Breast epithelium (tissue), 4 donors: ENCODE measurements at regions of chr6 and their contacts with region 1.

Region 1: DNA sequence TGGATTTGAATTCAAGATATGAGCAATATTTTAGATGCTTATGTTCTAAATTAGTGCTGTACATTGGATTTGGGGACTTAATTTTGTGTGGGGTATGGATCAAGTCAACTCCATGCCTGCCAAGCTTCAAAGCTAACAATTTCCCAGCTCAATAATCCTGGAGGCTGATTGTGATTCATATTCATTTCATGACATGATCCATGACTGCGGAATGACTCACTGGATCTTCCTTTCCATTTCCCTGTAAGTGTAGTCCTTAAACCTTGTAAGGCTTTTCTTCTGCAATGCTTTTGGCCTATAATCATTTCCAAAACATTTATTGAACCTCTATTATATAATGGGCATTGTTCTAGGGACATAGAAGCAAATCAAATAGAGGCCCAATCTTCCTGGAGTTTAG is 44.7 kb upstream of the CCN2 start:
- DNase-seq: no peak
- H3K4me3 ChIP-seq: no peak overlapping the region
- H3K27ac ChIP-seq: no peak overlapping the region
- H3K4me1 ChIP-seq: no peaks in the 10 kb centered on the region
- H3K27me3 ChIP-seq: no peaks in the 10 kb centered on the region
- CTCF ChIP-seq: no peak
- POLR2A ChIP-seq: no peak

Region 2: GRCh38 chr6:131890091-131890490 is 105.8 kb before region 1 on chr6:
- intact Hi-C with region 1: no loop called
- DNase-seq: no peak
- H3K4me3 ChIP-seq: no peak overlapping the region
- H3K27ac ChIP-seq: no peak overlapping the region
- H3K4me1 ChIP-seq: no peaks in the 10 kb centered on the region
- H3K27me3 ChIP-seq: no peaks in the 10 kb centered on the region
- CTCF ChIP-seq: no peak
- POLR2A ChIP-seq: no peak

Region 3: DNA sequence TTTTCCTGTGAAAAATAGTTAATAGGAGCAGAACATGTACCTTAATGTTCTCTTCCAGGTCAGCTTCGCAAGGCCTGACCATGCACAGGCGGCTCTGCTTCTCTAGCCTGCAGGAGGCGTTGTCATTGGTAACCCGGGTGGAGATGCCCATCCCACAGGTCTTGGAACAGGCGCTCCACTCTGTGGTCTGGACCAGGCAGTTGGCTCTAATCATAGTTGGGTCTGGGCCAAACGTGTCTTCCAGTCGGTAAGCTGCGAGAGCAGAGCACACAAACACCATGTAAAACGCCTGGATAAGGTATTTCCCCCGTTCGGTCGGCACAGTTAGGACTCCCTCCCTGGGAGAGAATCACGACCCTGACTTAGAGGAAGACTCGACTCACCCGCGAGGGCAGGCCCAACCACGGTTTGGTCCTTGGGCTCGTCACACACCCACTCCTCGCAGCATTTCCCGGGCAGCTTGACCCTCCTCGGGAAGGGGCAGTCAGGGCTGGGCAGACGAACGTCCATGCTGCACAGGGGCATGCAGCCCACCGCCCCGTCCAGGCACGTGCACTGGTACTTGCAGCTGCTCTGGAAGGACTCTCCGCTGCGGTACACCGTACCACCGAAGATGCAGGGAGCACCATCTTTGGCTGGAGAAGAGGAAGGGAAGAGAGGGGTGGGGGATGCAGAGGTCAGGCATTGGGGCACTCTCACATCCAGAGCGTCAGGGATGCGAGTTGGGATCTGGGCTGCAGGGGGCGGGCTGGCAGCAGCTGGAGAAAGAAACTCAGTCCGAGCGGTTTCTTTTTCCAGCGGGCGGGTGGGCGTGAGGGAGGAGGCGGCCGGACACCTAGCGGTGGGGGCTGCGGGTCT is 45.8 kb before region 1 on chr6:
- intact Hi-C with region 1: no loop called
- DNase-seq: peak; percentile 71 to 81
- H3K4me3 ChIP-seq: peak overlapping the region; percentile 76 to 79 (median 78)
- H3K27ac ChIP-seq: peak overlapping the region; percentile 92 to 98
- H3K4me1 ChIP-seq: no peaks in the 10 kb centered on the region
- H3K27me3 ChIP-seq: no peaks in the 10 kb centered on the region
- CTCF ChIP-seq: peak; percentile 16 to 37 (median 37)
- POLR2A ChIP-seq: no peak

Region 4: DNA sequence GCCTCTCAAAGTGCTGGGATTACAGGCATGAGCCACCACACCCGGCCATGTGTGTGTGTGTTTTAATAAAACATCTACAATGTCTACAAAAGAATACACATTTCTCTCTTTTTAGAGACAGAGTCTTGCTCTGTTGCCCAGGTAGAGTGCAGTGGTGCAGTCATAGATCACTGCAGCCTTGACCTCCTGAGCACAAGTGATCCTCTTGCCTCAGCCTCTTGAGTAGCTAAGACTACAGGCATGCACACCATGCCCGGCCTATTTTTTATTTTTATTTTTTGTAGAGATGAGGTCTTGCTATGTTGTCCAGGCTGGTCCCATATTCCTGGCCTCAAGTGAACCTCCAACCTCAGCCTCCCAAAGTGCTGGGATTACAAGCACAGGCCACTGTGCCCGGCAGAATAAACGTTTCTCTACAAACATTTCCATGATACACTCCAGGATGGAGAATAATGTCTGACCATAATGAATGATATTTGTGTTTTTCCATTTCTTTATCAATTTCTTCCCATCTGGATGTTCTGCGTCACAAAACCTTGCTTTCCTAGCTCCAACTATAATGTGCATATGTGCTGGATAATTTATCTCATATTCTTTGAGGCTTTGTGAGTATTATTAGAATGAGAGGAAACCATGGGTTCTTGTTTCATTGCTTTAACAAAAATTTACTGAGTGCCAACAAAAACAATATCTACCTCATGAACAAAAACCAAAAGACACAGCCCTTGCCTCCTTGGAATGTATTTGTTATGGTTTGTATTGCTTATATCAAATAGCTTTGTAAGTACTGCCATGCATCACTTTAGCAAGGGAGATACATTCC is 16.2 kb before region 1 on chr6:
- intact Hi-C with region 1: no loop called
- DNase-seq: no peak
- H3K4me3 ChIP-seq: no peak overlapping the region
- H3K27ac ChIP-seq: no peak overlapping the region
- H3K4me1 ChIP-seq: no peaks in the 10 kb centered on the region
- H3K27me3 ChIP-seq: no peaks in the 10 kb centered on the region
- CTCF ChIP-seq: no peak
- POLR2A ChIP-seq: no peak

Region 5: DNA sequence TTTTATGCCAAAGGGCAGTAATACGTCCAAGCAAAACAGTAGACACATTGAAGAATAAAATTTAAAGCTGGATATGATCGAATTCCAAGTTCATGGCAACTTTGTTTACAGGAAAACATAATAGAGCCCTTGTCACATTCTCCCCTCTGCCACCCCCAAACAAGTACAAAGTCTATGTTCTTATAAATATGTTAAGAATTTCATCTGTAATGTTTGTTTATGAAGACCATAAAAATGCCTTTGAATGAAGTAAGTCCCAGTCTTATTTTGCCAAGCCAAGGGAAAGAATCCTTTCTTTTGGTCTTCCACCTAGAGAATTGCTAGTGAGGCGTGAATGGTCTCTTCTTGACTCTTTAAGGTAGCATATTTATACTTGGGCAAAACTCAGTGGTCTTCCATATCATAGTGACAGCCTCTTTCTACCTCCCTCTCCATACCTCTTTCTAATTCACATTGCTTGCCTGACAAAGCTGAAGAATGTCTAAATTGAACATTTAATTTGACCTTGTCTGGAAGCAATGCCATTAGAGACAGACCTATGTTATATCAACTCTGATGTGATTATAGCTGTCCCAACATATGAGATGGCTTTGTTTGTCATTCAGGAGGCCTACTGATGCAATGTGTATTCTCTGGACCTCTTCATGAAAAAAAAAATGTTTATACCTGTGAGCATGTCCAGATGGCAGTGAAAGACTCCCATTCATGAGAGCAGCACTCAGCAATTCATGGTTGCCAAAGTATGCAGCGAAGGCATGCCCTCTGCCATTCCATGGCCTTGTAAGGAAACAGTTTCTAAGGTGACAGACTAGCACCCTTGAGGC is 25.8 kb after region 1 on chr6:
- intact Hi-C with region 1: loop called (anchors 1 kb)
- DNase-seq: peak in 1 of 2 donors; percentile 47
- H3K4me3 ChIP-seq: no peak overlapping the region
- H3K27ac ChIP-seq: no peak overlapping the region
- H3K4me1 ChIP-seq: no peaks in the 10 kb centered on the region
- H3K27me3 ChIP-seq: no peaks in the 10 kb centered on the region
- CTCF ChIP-seq: no peak
- POLR2A ChIP-seq: no peak